Activated CD4-positive, alpha-beta memory T cell treated with anti-CD3 and anti-CD28 coated beads, Interleukin-2, amount 10 ng/mL, durations not matched to agents 7 days and 5 days (primary cell): ENCODE measurements at regions of chr6 and their contacts with region 1.

Region 1: GRCh38 chr6:152316024-152316423 is 321.1 kb downstream of the SYNE1 start:
- DNase-seq: no peak
- H3K4me3 Mint-ChIP-seq: no peak overlapping the region
- H3K27ac Mint-ChIP-seq: no peak overlapping the region
- H3K4me1 Mint-ChIP-seq: no peaks in the 10 kb centered on the region
- H3K27me3 Mint-ChIP-seq: peaks cover 12% of the 10 kb centered on the region

Region 2: DNA sequence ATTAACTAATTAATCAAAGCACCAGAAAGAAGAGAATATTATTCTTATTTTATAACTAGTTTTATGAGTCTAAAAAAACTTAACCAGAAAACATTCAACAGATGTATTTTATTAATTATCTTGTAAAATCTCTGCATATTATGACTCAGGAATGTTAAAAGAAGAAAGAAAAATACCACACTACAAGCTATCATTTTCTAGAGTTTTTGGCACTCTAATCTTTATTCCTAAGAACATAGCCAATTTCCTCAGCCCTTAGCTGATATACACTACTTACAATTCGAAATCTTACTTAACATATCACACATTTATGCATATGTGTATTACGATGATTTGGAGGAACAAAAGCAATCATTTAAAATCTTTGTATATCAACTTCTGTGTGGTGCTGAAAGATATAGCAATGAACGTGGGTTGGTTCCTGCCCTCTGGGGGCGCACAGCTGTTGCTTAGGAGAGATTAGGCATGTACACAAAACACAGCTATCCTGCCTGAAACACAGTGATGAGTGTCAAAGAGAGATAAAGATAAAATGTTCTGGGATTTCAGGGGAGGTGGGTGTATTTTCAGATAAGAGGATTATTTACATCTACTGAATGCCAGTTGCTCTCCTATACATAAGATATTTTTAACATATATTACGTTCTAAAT is 83.4 kb before region 1 on chr6:
- CTCF ChIA-PET with region 1: no interaction called
- POLR2A ChIA-PET with region 1: no interaction called
- DNase-seq: no peak
- H3K4me3 Mint-ChIP-seq: peak overlapping the region; percentile 48
- H3K27ac Mint-ChIP-seq: peak overlapping the region; percentile 70
- H3K4me1 Mint-ChIP-seq: peaks cover 22% of the 10 kb centered on the region
- H3K27me3 Mint-ChIP-seq: no peaks in the 10 kb centered on the region

Region 3: DNA sequence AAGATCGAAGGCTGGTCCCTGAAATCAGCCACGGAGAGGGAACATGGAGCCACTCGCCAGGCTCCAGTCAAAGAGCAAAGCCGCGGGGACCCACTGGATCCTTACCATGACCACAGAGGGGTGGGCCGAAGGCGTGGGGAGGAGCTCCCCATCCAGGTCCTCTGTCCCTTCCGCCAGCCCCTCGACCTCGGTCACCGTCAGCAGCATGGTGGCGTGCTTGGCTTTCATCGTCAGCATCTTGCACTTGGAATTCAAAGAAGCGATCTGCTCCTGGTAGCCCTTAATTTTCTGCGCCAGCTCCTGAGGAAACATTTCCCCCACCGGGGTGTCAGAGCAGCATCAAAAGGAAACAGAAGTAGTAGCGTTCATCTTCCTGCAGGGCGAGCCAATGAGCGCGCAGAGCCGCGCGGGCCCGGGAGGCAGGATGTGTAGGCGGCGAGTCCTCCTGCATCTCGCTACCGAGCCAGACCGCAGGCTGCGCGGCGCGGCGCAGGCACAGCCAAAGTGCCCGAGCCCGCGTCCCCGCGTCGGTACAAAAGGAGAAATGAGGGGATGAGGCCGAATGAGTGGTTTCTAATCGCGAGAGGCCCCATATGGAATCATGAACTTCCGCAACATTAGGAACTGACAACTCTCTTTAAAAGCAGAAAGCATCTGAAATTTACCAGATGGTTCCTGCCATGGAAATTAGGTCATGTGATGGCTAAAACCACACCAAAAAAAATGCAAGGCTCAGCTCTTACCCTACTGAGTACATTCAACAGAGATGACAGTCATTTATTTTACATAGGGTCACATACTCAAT is 14.1 kb before region 1 on chr6:
- CTCF ChIA-PET with region 1: interaction called, 7 read pairs
- POLR2A ChIA-PET with region 1: interaction called, 12 read pairs
- DNase-seq: peak; percentile 92
- H3K4me3 Mint-ChIP-seq: peak overlapping the region; percentile 95
- H3K27ac Mint-ChIP-seq: peak overlapping the region; percentile 97
- H3K4me1 Mint-ChIP-seq: peaks cover 30% of the 10 kb centered on the region
- H3K27me3 Mint-ChIP-seq: no peaks in the 10 kb centered on the region

Region 4: DNA sequence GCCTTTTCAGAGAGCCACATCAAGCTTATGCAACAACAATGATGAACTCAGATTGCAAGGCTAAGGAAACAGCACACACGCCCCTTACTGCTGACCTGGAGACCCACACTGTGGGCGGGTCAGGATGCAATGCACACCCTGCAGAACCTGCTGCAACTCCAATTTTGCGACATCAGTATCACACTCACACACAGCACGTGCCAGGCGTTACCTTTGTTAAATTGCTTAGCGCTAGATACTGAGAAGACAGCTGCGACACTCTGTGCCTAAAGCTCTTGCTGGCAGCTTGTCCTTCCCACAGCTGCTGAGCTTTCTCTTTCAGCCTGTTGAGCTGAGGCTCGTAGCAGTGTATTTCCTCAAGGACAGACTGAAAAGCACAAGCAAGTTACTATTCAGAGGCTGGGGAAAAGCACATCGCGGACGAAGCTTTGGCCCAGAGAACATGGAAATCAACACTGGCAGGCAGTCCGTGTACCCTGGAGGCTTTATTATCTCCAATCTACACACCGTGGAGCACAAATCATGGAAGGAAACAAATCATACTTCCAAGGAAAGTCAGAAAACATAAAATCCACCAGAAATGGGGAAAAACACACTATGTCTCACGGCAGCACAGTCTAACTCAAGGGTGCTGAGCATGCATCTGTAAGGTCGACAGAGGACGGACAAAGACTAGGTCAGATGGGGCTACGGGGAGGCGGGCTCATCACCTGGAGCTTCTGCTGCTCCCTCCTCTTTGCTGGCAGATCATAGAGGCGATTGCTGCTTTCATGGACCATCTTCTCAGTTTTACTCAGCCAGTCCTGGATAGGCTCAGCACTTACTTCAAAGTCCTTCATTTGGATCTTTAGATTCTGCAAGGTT is 53.0 kb after region 1 on chr6:
- CTCF ChIA-PET with region 1: no interaction called
- POLR2A ChIA-PET with region 1: no interaction called
- DNase-seq: no peak
- H3K4me3 Mint-ChIP-seq: no peak overlapping the region
- H3K27ac Mint-ChIP-seq: no peak overlapping the region
- H3K4me1 Mint-ChIP-seq: no peaks in the 10 kb centered on the region
- H3K27me3 Mint-ChIP-seq: peaks cover 12% of the 10 kb centered on the region